ENCODE measurements at regions of chr6 and their contacts with region 1.

Region 1: GRCh38 chr6:2999618-3000557 is at the start of gene NQO2:
- DNase-seq: peak; percentile 72 to 86 (median 84)
- H3K4me3 ChIP-seq: peak within 1 kb of the TSS; percentile 57 to 91 (median 83)
- H3K27ac ChIP-seq: peak within 1 kb of the TSS in 1 of 2 experiments; percentile 83
- H3K4me1 ChIP-seq: peaks cover 6 to 28% (median 23%) of the 10 kb centered on the region in 4 experiments
- H3K27me3 ChIP-seq: no peaks in the 10 kb centered on the region

Region 2: DNA sequence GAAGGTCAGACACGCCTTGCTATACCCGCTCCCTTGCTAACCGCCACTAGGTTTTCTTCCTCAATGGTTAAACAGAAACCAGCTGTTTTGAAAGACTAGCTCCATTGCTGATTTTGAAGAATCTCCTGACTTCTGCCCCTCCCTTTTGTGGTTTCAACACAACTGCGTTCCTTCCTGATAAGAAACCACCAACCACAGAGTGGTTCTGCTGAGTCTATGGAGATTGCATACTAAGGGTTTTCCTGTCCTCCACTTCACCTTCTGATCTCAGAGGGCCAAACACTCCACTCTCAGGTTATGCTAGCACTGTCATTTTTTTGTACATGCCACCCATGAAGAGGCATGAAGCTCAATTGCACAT is 457.1 kb before region 1 on chr6:
- CTCF ChIA-PET with region 1: no interaction called
- POLR2A ChIA-PET with region 1: no interaction called
- DNase-seq: peak; percentile 96 to 99 (median 98)
- H3K4me3 ChIP-seq: peak overlapping the region in 1 of 7 experiments; percentile 30
- H3K27ac ChIP-seq: no peak overlapping the region
- H3K4me1 ChIP-seq: peaks cover 15 to 27% (median 23%) of the 10 kb centered on the region in 4 experiments
- H3K27me3 ChIP-seq: peaks cover 3 to 36% (median 21%) of the 10 kb centered on the region in 5 experiments

Region 3: GRCh38 chr6:3013479-3013878 is 13.6 kb after region 1 on chr6:
- CTCF ChIA-PET with region 1: interaction called, 18 read pairs
- POLR2A ChIA-PET with region 1: no interaction called
- DNase-seq: peak; percentile 24 to 78 (median 76)
- H3K4me3 ChIP-seq: no peak overlapping the region
- H3K27ac ChIP-seq: no peak overlapping the region
- H3K4me1 ChIP-seq: peaks cover 1 to 13% (median 6%) of the 10 kb centered on the region in 4 experiments
- H3K27me3 ChIP-seq: no peaks in the 10 kb centered on the region

Region 4: GRCh38 chr6:3023663-3024483 is 24.0 kb after region 1 on chr6:
- CTCF ChIA-PET with region 1: interaction called, 18 read pairs
- POLR2A ChIA-PET with region 1: interaction called, 4 read pairs
- DNase-seq: peak; percentile 93 to 98 (median 97)
- H3K4me3 ChIP-seq: peak overlapping the region; percentile 42 to 74 (median 65)
- H3K27ac ChIP-seq: peak overlapping the region; percentile 29 to 81
- H3K4me1 ChIP-seq: peaks cover 10 to 61% (median 42%) of the 10 kb centered on the region in 4 experiments
- H3K27me3 ChIP-seq: no peaks in the 10 kb centered on the region

Region 5: GRCh38 chr6:3039384-3039783 is 39.5 kb after region 1 on chr6:
- CTCF ChIA-PET with region 1: interaction called, 11 read pairs
- POLR2A ChIA-PET with region 1: no interaction called
- DNase-seq: no peak
- H3K4me3 ChIP-seq: no peak overlapping the region
- H3K27ac ChIP-seq: no peak overlapping the region
- H3K4me1 ChIP-seq: peaks cover 0 to 3% (median under 1%) of the 10 kb centered on the region in 4 experiments
- H3K27me3 ChIP-seq: no peaks in the 10 kb centered on the region

Region 6: DNA sequence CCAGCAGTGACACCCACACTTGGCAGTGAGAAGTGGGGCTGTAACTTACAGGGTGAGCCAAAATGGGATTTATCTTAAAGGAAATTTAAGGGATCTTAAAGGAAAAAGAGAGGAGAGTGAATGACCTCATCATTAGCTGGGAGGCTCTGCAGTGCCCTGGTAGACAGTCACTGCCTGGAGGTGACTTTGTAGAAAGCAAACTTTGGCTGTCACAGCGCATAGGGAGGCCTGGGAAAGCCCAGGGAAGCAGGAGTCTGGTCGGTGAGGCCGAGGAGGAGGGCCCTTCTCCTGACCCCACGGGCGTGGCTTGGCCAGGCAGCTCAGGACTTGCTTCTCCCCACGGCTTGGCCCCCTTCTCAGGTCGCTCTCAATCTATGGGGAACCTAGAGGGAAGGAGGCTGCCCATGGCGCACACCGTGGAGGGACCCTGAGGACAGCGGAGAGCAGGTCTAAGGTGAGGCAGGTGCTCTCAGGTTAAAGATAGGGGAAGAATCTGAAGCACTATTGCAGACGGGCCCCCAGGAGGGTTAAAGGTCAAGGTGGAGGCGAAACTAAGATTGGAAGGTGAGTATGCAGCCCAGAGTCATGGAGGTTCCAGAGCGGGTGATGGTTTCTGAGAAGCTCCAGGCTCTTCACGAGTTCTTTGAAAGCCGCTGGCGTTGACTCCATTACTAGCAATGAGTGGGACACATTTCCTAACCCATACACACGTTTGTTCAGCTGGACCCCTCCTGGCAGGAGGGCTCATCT is 52.8 kb after region 1 on chr6:
- CTCF ChIA-PET with region 1: interaction called, 18 read pairs
- POLR2A ChIA-PET with region 1: interaction called, 3 read pairs
- DNase-seq: no peak
- H3K4me3 ChIP-seq: peak overlapping the region in 2 of 7 experiments; percentile 50 to 72
- H3K27ac ChIP-seq: peak overlapping the region in 1 of 2 experiments; percentile 71
- H3K4me1 ChIP-seq: peaks cover 0 to 22% (median 16%) of the 10 kb centered on the region in 4 experiments
- H3K27me3 ChIP-seq: no peaks in the 10 kb centered on the region

Region 7: GRCh38 chr6:3058957-3059356 is 59.1 kb after region 1 on chr6:
- CTCF ChIA-PET with region 1: interaction called, 18 read pairs
- POLR2A ChIA-PET with region 1: interaction called, 6 read pairs
- DNase-seq: no peak
- H3K4me3 ChIP-seq: no peak overlapping the region
- H3K27ac ChIP-seq: no peak overlapping the region
- H3K4me1 ChIP-seq: peaks cover 2 to 24% (median 10%) of the 10 kb centered on the region in 4 experiments
- H3K27me3 ChIP-seq: no peaks in the 10 kb centered on the region

Region 8: DNA sequence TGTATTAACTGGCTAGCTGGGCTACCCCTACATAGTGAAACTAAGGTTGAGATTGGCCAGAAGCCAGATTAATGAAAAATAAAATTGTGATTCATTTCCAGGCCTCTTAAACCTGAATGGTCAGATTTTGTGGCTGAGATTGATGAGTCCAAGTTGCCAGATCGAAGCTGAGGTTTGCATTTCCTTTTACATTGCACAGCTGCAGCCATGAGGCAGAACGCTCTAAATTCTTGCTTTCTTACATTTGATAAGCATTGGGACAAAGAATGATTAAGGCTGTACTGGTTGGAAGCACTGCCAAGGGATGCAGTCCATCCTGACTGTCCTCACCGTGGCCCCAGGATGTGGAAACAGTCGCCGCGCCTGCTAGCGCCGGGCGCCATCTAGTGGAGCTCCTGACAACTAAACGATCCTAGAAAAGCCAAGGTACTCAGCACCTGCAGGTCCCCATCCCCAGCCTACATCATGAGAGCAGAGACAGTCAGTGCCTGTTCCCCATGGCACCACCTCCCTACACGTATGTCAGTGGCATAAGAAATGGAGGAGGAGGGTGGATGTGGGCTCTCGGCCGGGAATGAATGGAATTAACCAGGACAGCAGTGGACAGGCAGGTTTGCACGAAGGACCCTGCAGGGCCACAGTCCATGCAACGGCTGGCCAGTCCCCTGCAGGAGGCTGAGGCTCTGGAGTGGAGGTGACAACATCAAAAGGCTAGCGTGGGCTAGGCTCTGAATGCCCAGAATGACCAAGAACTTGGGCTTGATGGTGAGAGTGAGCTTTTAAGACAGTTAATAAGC is 732.7 kb after region 1 on chr6:
- CTCF ChIA-PET with region 1: no interaction called
- POLR2A ChIA-PET with region 1: no interaction called
- DNase-seq: peak in 2 of 3 donors; percentile 51 to 55
- H3K4me3 ChIP-seq: no peak overlapping the region
- H3K27ac ChIP-seq: no peak overlapping the region
- H3K4me1 ChIP-seq: peaks cover 0 to 11% (median 6%) of the 10 kb centered on the region in 4 experiments
- H3K27me3 ChIP-seq: no peaks in the 10 kb centered on the region